ENCODE measurements at regions of chr17 and their contacts with region 1.

Region 1: DNA sequence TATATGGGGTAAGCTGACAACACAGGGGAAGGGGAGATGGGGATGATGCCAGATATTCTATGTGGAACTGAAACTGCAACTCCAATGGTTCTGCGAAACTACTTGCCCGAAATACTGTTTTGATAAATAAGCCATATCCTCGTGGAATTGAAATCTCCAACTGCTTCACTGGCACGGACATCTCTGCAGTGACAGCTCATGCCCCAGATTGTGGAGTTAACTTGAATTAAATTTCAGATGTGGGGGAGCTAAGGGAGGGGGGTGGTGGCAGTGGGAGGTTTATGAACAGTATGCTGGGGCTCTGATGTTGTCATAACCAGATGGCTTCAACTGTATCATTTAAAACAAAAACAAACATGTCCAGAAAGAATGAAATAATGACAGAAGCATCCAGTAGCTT is 21.8 kb downstream of the NXPH3 start:
- DNase-seq: no peak
- ATAC-seq: no peak
- H3K4me3 ChIP-seq: no peak overlapping the region
- H3K4me3 Mint-ChIP-seq: no peak overlapping the region
- H3K27ac ChIP-seq: no peak overlapping the region
- H3K27ac Mint-ChIP-seq: peak overlapping the region in 1 of 2 donors; percentile 48
- H3K4me1 ChIP-seq: no peaks in the 10 kb centered on the region
- H3K4me1 Mint-ChIP-seq: no peaks in the 10 kb centered on the region
- H3K27me3 ChIP-seq: no peaks in the 10 kb centered on the region
- H3K27me3 Mint-ChIP-seq: no peaks in the 10 kb centered on the region

Region 2: DNA sequence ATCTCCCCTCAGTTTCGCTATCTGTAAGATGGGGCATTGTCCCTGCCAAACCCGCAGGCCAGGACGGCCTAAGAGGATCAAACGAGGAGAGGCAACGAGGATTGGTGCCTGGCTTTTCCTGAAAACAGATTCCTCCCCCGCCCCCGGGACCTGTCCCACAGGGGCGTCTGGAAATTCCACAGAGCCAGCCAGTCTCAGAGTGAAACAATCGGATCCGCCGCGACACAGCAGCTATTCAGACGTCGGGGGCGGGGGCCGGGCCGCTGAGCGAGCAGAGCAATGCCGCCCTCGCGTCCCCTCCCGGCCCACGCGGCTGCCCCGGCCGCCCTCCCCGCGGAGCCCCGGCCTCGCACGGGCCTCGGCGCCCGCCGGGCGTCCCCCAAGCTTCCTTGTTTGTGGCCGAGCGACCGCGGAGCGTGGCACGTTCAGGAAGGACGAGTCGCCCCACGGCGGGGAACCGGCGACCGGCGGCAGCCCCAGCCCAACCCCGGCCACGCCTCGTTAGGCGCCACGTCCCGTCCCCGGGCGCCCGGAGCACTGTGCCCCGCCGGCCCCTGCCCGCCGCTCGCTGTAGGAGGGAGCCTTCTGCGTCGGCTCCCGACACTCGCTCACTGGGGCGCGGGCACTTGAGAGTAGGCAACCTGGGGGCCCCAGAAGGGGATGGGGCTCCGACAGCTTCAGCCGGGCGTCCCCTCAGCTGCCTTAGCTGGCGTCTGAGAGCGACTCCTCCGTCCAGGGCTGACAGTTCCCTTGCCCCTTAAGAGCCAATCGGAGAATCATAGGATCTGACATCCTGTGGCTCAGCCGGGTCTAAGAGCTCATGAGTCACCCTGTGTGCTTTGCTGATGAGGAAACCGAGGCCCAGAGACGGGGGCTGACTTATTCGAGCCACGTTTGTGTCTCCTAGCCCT is 337.2 kb before region 1 on chr17:
- CTCF ChIA-PET with region 1: no interaction called
- POLR2A ChIA-PET with region 1: interaction called in 1 of 2 experiments, 13 read pairs
- DNase-seq: peak in 33 of 35 experiments; percentile 6 to 57 (median 29)
- ATAC-seq: peak; percentile 79 to 85 (median 82)
- H3K4me3 ChIP-seq: peak overlapping the region; percentile 52 to 73
- H3K4me3 Mint-ChIP-seq: peak overlapping the region; percentile 75 to 81 (median 79)
- H3K27ac ChIP-seq: no peak overlapping the region
- H3K27ac Mint-ChIP-seq: no peak overlapping the region
- H3K4me1 ChIP-seq: peaks cover 5 to 17% of the 10 kb centered on the region in 2 experiments
- H3K4me1 Mint-ChIP-seq: peaks cover 9 to 11% (median 11%) of the 10 kb centered on the region in 3 donors
- H3K27me3 ChIP-seq: peaks cover 0 to 33% of the 10 kb centered on the region in 2 experiments
- H3K27me3 Mint-ChIP-seq: peaks cover 8 to 11% of the 10 kb centered on the region in 2 donors

Measured in T-cell (primary cell).